ENCODE measurements at regions of chr1 and their contacts with region 1.

Region 1: DNA sequence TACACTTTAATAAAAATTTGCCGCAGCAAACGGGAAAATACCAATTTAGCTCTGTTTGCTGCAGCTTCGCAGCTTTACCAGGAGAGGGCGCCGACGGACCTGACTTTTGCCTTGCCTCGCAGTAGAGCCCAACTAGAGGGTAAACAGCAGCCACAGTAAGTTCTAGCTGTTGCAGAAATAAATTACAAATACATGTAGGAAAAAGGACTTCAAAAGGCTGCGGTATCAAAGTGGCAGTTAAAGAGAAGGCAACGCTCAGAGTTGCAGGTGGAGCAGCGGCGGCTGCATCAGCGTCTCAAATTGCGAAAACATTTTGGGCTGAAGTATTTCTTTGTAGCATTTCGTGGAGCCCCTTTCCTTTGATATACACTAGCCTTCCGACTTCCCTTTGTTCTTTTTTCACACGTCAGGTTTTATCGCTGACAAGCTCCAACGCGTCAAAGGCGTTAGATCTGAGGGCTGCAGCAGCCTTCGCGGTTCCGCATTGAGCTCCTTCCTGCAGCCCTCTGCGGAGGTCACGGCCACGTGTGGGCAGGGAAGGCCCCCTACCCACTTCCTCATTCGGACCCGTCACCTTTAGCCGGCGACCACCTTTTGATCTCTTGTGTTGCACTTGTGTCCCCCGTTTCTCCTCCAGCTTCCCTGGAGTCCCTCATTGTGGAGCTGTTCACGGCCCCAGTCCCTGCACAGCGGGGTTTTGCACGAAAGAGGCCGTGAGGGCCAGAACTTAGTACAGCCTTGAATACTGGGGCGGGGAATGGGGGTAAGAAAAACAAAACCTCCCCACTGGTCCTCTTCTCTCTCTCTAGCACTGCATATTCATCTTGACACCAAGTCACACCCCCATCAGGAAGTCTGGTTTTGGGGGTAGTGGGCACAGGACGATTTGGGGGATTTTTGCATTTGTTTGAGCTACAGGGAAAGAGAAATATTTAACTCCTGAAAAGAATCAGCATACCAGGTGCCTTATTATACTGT is 72.8 kb downstream of the S1PR1 start:
- DNase-seq: peak; percentile 34
- H3K4me3 ChIP-seq: peak overlapping the region; percentile 34
- H3K27ac ChIP-seq: no peak overlapping the region
- H3K4me1 ChIP-seq: peaks cover 3% of the 10 kb centered on the region
- H3K27me3 ChIP-seq: no peaks in the 10 kb centered on the region
- CTCF ChIP-seq: peak; percentile 80

Region 2: DNA sequence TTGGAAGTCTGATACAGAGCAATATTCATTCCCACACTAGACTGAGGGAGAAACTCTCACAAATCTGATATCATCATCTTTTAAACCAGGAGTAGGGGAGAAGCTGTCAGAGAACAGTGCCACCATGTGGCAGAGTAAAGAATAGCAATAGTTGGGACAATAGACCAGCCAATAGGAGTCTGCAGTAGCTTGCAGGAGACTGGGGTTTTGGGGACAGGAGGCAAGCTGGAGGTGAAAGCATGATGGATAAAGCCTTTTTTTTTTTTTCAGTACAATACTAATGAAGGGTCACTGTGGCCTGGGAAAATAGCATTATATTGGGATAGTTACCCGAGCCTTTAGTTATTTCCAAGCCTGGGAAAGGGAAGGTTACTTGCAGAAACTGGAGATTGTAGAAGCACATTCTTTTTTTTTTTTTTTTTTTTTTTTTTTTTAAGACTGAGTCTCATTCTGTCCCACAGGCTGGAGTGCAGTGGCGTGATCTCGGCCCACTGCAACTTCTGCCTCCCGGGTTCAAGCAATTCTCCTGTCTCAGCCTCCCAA is 47.9 kb after region 1 on chr1:
- intact Hi-C with region 1: loop called (anchors 5 kb)
- DNase-seq: peak; percentile 73
- H3K4me3 ChIP-seq: no peak overlapping the region
- H3K27ac ChIP-seq: no peak overlapping the region
- H3K4me1 ChIP-seq: no peaks in the 10 kb centered on the region
- H3K27me3 ChIP-seq: no peaks in the 10 kb centered on the region
- CTCF ChIP-seq: peak; percentile 77

Region 3: DNA sequence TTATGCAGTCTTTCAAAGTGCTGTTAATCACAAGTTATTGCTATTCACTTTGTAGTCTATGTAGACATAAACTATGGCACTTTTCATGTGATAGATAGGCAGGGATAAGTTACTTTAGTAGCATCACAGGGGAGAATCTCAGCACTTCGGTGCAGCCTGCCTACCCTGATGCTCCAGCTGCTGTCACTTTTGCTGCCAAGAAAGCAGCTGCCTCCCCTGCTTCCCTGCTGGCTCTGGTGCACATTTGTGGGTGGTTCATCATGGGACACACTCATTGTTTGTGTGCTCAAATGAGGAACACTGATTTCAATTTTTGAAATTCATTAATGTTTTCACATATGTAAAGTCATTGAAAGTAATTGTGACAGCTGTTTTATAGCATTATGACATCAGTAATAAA is 199.7 kb after region 1 on chr1:
- intact Hi-C with region 1: no loop called
- DNase-seq: peak; percentile 19
- H3K4me3 ChIP-seq: no peak overlapping the region
- H3K27ac ChIP-seq: no peak overlapping the region
- H3K4me1 ChIP-seq: no peaks in the 10 kb centered on the region
- H3K27me3 ChIP-seq: no peaks in the 10 kb centered on the region
- CTCF ChIP-seq: no peak